BJ (cell line): ENCODE measurements at regions of chr16 and their contacts with region 1.

Region 1: GRCh38 chr16:81444448-81445121 is at the start of gene CMIP:
- DNase-seq: no peak
- H3K4me3 ChIP-seq: peak within 1 kb of the TSS; percentile 71
- H3K27me3 ChIP-seq: peaks cover 7% of the 10 kb centered on the region
- CTCF ChIP-seq: no peak
- polyA plus RNA-seq, gene CMIP: 3.4 and 4.9 TPM in 2 replicates

Region 2: DNA sequence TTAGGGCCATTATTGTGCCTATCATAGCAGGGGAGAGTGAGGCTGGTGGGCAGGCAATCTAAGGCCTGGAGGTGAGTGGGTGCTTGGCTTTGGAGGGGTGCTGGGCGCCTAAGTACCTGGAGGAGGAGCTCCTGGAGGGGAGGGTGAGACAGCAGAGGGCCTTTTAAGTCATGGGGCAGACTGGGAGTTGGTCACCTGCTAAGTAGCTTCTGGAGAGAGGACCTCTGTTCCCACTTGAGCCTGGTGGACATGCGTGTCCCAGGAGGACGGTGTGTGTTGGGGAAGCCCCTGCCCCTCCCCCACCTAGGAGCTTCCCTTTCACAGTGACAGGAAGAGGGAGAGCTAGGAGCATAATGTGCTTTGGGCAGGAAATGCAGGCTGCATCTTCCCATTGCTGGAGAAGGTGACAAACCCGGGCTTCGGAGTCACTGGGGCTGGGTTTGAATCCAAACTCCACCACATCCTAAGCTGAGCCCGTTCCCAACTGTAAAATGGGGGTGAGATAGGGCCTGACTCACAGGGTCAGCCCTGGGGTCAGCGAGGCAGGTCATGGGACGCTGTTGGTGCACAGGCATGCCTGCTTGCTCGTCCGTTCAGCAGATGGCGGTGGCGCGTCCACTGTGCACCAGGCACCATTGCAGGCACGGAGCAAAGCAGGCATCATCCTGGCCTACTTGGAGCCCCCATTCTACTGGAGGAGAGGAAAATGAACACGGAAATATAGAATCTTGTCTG is 37.9 kb after region 1 on chr16:
- CTCF ChIA-PET with region 1: no interaction called
- POLR2A ChIA-PET with region 1: interaction called, 12 read pairs
- DNase-seq: no peak
- H3K4me3 ChIP-seq: no peak overlapping the region
- H3K27me3 ChIP-seq: no peaks in the 10 kb centered on the region
- CTCF ChIP-seq: no peak

Region 3: GRCh38 chr16:81590714-81591546 is 146.3 kb after region 1 on chr16:
- CTCF ChIA-PET with region 1: no interaction called
- POLR2A ChIA-PET with region 1: no interaction called
- DNase-seq: no peak
- H3K4me3 ChIP-seq: no peak overlapping the region
- H3K27me3 ChIP-seq: no peaks in the 10 kb centered on the region
- CTCF ChIP-seq: no peak